Natural killer cell (primary cell): ENCODE measurements at regions of chr5 and their contacts with region 1.

Region 1: GRCh38 chr5:112737463-112738190 is at the start of gene APC:
- DNase-seq: peak; percentile 82 to 86
- ATAC-seq: peak; percentile 96 to 98 (median 97)
- H3K4me3 ChIP-seq: peak within 1 kb of the TSS; percentile 59
- H3K4me3 Mint-ChIP-seq: peak within 1 kb of the TSS; percentile 98
- H3K27ac ChIP-seq: peak within 1 kb of the TSS; percentile 24
- H3K27ac Mint-ChIP-seq: peak within 1 kb of the TSS; percentile 53 to 93
- H3K4me1 ChIP-seq: peaks cover 8% of the 10 kb centered on the region
- H3K4me1 Mint-ChIP-seq: peaks cover 30 to 33% of the 10 kb centered on the region in 2 donors
- H3K27me3 ChIP-seq: no peaks in the 10 kb centered on the region
- H3K27me3 Mint-ChIP-seq: no peaks in the 10 kb centered on the region
- CTCF ChIP-seq: no peak
- total RNA-seq, gene APC: 40.1 to 52.3 (median 49.0) TPM

Region 2: GRCh38 chr5:112860929-112861637 is 123.5 kb after region 1 on chr5 and contains the start of gene SRP19:
- intact Hi-C with region 1: loop called (anchors 1 kb)
- DNase-seq: peak; percentile 87 to 97
- ATAC-seq: peak; percentile 93 to 97 (median 96)
- H3K4me3 ChIP-seq: peak within 1 kb of the TSS; percentile 75
- H3K4me3 Mint-ChIP-seq: peak within 1 kb of the TSS; percentile 96
- H3K27ac ChIP-seq: peak within 1 kb of the TSS; percentile 78
- H3K27ac Mint-ChIP-seq: peak within 1 kb of the TSS; percentile 95 to 96
- H3K4me1 ChIP-seq: peaks cover 25% of the 10 kb centered on the region
- H3K4me1 Mint-ChIP-seq: peaks cover 24 to 35% of the 10 kb centered on the region in 2 donors
- H3K27me3 ChIP-seq: peaks cover 5% of the 10 kb centered on the region
- H3K27me3 Mint-ChIP-seq: peaks cover 9 to 24% of the 10 kb centered on the region in 2 donors
- CTCF ChIP-seq: no peak
- total RNA-seq, gene SRP19: 52.8 to 58.5 (median 54.7) TPM